CD8-positive, alpha-beta T cell (primary cell): ENCODE measurements at regions of chr17 and their contacts with region 1.

Region 1: DNA sequence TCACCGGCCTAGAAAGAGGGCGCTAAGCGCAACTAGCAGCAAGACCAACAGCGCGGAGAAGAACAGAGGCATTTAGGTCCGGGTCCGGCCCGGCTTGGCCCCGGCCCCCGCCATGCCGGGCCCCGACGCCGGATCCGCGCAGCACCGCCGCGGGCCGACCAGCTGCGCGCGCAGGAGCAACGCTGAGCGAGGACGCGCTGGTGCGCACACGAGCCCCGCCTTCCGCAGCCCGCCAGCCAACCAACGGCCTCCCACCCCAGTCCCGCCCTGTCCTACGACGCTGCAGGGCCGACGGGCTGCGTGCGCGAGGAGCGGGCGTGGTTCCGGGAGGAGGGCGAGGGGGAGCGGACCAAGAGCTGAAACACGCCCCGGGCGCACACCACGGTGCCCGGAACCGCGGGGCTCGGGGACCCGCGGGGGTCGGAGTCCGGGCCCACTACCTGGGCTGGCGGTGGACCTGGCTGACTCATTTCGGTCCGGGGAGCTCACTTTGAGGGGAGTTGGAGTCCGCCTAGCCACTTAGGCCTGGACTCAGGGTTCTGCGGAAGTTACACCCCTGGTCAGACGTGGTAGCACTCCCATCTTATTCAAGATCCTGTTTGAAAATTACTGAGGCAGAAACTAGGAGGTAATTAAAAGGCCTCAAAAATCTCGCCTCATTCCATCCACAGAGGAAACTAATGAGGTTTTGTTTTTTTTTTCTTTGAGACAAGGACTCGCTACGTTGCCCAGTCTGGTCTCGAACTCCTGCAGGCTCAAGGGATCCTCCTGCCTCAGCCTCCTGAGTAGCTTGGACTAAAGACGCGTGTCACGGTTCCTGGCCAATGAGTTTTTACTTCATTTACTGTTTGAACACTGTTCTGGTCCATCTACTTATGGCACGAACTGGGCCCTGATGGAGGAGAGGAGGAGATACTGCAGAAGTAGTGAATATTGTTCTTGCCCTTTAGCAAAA is at the start of gene BLTP2:
- DNase-seq: peak; percentile 91 to 98 (median 96)
- ATAC-seq: peak; percentile 98
- H3K4me3 ChIP-seq: peak within 1 kb of the TSS; percentile 81 to 82
- H3K4me3 Mint-ChIP-seq: peak within 1 kb of the TSS; percentile 90
- H3K27ac ChIP-seq: peak within 1 kb of the TSS; percentile 75 to 89
- H3K27ac Mint-ChIP-seq: peak within 1 kb of the TSS; percentile 95
- H3K4me1 ChIP-seq: peaks cover 34% of the 10 kb centered on the region
- H3K4me1 Mint-ChIP-seq: peaks cover 46% of the 10 kb centered on the region
- H3K27me3 ChIP-seq: no peaks in the 10 kb centered on the region
- H3K27me3 Mint-ChIP-seq: no peaks in the 10 kb centered on the region
- CTCF ChIP-seq: no peak
- total RNA-seq, gene BLTP2: 136 to 148 TPM

Region 2: GRCh38 chr17:28571255-28572122 is 73.8 kb before region 1 on chr17 and contains the start of gene PIGS:
- CTCF ChIA-PET with region 1: interaction called, 3 read pairs
- POLR2A ChIA-PET with region 1: interaction called, 10 read pairs
- intact Hi-C with region 1: loop called in 1 of 2 experiments (anchors 1 kb)
- DNase-seq: peak; percentile 74 to 94 (median 90)
- ATAC-seq: peak; percentile 95
- H3K4me3 ChIP-seq: peak within 1 kb of the TSS; percentile 98 to 100
- H3K4me3 Mint-ChIP-seq: peak within 1 kb of the TSS; percentile 97
- H3K27ac ChIP-seq: peak within 1 kb of the TSS; percentile 69 to 92
- H3K27ac Mint-ChIP-seq: peak within 1 kb of the TSS; percentile 96
- H3K4me1 ChIP-seq: peaks cover 45% of the 10 kb centered on the region
- H3K4me1 Mint-ChIP-seq: peaks cover 69% of the 10 kb centered on the region
- H3K27me3 ChIP-seq: no peaks in the 10 kb centered on the region
- H3K27me3 Mint-ChIP-seq: no peaks in the 10 kb centered on the region
- CTCF ChIP-seq: no peak
- total RNA-seq, gene PIGS: 46.2 to 60.0 TPM

Region 3: DNA sequence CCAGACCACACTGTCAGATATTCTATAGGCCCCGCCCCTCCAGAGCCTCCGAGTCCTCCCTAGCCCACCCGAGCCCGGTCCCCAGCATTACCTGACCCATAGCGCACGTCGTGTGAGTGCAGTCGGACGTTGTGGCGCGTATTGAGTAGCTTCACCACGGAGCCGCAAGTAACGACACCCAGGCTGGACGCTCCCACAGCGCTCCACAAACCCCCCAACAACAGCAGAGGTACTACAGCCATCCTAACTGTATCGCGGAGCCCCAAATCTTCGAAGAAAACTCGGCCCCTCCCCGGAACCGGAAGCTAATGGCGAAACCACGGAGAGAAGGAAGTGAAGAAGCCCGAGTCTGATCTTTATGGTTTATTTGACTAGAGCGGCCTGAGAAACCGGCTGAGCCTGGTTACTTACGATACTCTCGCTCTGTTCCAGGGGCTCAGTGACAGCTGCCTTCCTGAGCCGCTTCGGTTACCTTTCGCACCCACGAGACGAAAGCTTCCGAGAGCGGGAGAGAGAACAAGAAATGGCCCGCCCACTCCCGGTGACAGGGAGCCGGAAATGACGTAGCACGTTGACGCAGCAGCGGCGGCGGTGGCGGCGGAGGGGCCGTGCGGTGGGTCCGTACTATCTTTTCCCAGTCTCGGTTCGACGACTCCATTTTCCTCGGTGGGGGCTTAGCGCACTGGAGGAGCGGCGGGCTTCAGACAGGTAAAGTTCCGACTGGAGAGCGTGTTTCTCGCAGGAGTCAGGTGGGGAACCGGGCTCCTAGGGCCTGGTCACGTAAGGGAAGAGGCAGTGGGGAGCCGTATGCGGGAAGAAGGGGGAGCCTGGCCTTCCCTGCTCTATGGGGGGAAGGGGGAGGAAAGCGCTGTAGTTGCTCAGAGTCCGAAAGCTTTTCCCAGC is 16.6 kb after region 1 on chr17 and contains the starts of genes SDF2 and SUPT6H:
- CTCF ChIA-PET with region 1: interaction called, 49 read pairs
- POLR2A ChIA-PET with region 1: interaction called, 58 read pairs
- intact Hi-C with region 1: loop called (anchors 1 kb)
- DNase-seq: peak; percentile 83 to 97 (median 96)
- ATAC-seq: peak; percentile 85
- H3K4me3 ChIP-seq: peak within 1 kb of the TSS; percentile 91 to 94
- H3K4me3 Mint-ChIP-seq: peak within 1 kb of the TSS; percentile 98
- H3K27ac ChIP-seq: peak within 1 kb of the TSS; percentile 98 to 99
- H3K27ac Mint-ChIP-seq: peak within 1 kb of the TSS; percentile 99
- H3K4me1 ChIP-seq: peaks cover 43% of the 10 kb centered on the region
- H3K4me1 Mint-ChIP-seq: peaks cover 60% of the 10 kb centered on the region
- H3K27me3 ChIP-seq: no peaks in the 10 kb centered on the region
- H3K27me3 Mint-ChIP-seq: no peaks in the 10 kb centered on the region
- CTCF ChIP-seq: peak; percentile 20
- total RNA-seq, gene SDF2: 30.4 to 38.3 TPM
- total RNA-seq, gene SUPT6H: 163 to 169 TPM

Region 4: GRCh38 chr17:28717578-28718333 is 72.5 kb after region 1 on chr17 and contains the start of gene RAB34:
- CTCF ChIA-PET with region 1: no interaction called
- POLR2A ChIA-PET with region 1: interaction called, 8 read pairs
- intact Hi-C with region 1: loop called (anchors 2 to 5 kb)
- DNase-seq: peak in 4 of 9 experiments; percentile 22 to 53 (median 33)
- ATAC-seq: no peak
- H3K4me3 ChIP-seq: no peak within 1 kb of the TSS
- H3K4me3 Mint-ChIP-seq: peak within 1 kb of the TSS; percentile 59
- H3K27ac ChIP-seq: no peak within 1 kb of the TSS
- H3K27ac Mint-ChIP-seq: peak within 1 kb of the TSS; percentile 55
- H3K4me1 ChIP-seq: peaks cover 28% of the 10 kb centered on the region
- H3K4me1 Mint-ChIP-seq: peaks cover 39% of the 10 kb centered on the region
- H3K27me3 ChIP-seq: peaks cover 0 to 12% of the 10 kb centered on the region in 2 experiments
- H3K27me3 Mint-ChIP-seq: peaks cover 16% of the 10 kb centered on the region
- CTCF ChIP-seq: no peak
- total RNA-seq, gene RAB34: 13.9 to 14.1 TPM

Region 5: GRCh38 chr17:28902819-28903545 is 257.7 kb after region 1 on chr17 and contains the start of gene DHRS13:
- CTCF ChIA-PET with region 1: no interaction called
- POLR2A ChIA-PET with region 1: interaction called, 3 read pairs
- intact Hi-C with region 1: loop called (anchors 5 kb)
- DNase-seq: peak; percentile 87 to 98 (median 95)
- ATAC-seq: peak; percentile 93
- H3K4me3 ChIP-seq: peak within 1 kb of the TSS; percentile 71 to 72
- H3K4me3 Mint-ChIP-seq: peak within 1 kb of the TSS; percentile 93
- H3K27ac ChIP-seq: peak within 1 kb of the TSS; percentile 61 to 62
- H3K27ac Mint-ChIP-seq: peak within 1 kb of the TSS; percentile 90
- H3K4me1 ChIP-seq: peaks cover 31% of the 10 kb centered on the region
- H3K4me1 Mint-ChIP-seq: peaks cover 33% of the 10 kb centered on the region
- H3K27me3 ChIP-seq: no peaks in the 10 kb centered on the region
- H3K27me3 Mint-ChIP-seq: no peaks in the 10 kb centered on the region
- CTCF ChIP-seq: peak; percentile 100
- total RNA-seq, gene DHRS13: 27.3 to 30.9 TPM